Posterior cingulate gyrus (tissue), 11 donors: ENCODE measurements at regions of chr1 and their contacts with region 1.

Region 1: DNA sequence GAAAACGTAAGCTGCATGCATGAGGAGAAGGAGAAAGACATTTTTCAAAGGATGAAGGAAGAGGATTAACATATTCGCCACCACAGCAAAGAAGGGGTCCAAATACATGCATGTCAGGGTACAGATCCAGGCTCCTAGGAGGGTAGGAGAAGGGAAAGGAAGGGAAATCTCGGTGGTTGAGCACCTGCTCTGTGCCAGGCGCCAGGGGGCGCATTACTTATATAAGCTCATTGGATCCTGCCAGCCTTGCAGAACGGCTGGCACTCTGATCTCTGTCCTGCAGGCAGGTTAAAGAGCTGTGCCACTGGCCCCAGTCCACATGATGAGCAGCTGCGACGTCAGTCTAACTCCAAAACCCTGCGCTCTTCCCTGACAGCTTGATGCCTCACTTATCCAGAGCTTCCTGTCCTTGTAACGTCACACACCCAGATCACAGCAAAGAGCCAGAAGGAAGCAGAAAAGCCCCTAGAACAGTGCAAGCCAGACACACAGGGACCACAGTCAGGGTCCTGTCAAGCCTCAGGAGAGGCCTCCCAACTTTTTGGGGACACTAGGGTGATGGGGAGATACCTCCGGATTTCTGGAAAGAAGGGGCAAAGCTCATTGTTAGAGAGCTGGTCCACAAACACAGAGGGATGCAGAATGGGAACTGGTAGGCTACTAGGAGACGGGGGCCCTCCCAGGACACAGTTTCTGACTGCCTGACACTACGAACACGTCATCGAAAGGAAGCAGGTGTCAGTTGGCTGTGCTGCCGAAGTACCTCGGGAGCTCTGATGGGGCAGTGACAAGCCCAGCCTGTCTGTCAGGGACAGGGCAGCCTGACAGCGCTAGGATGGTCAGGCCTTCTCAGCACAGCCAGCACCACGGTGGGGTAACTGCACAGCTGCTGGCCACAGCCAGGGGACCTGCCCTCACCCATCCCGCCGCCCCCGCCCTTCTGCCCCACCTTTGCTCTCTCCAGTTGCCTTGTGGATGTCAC is 99.1 kb downstream of the BEND5 start:
- DNase-seq: peak; percentile 30 to 95 (median 70)

Region 2: GRCh38 chr1:48785869-48786268 is 108.3 kb after region 1 on chr1:
- intact Hi-C with region 1: no loop called
- DNase-seq: no peak

Region 3: GRCh38 chr1:48817505-48818114 is 140.0 kb after region 1 on chr1:
- intact Hi-C with region 1: loop called (anchors 2 kb)
- DNase-seq: peak; percentile 14 to 90 (median 62)

Region 4: DNA sequence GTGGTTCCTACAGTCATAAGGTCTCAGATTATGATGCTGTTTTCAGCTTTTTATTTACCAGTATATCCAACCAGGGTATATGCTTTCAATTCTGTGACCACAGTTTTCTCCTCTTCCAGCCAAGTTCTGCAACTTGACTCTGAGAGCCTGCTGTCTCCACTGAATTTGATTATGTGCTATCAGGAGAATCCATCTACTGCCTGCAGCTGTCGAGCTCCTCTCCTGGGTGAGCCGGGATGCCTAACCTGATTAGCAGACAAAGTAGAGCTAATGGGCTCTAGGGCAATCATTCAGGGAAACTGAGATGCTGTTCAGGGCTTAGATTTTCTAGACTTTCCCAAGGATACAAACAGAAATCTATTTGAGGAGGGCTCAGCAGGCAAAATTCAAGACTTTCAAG is 370.6 kb after region 1 on chr1:
- intact Hi-C with region 1: no loop called
- DNase-seq: no peak